ENCODE measurements at regions of chr10 and their contacts with region 1.

Region 1: GRCh38 chr10:25226775-25227682 is 52.2 kb downstream of the GPR158 start:
- DNase-seq: peak; percentile 31
- H3K4me3 Mint-ChIP-seq: no peak overlapping the region
- H3K27ac Mint-ChIP-seq: no peak overlapping the region
- H3K4me1 Mint-ChIP-seq: no peaks in the 10 kb centered on the region
- H3K27me3 Mint-ChIP-seq: no peaks in the 10 kb centered on the region

Region 2: DNA sequence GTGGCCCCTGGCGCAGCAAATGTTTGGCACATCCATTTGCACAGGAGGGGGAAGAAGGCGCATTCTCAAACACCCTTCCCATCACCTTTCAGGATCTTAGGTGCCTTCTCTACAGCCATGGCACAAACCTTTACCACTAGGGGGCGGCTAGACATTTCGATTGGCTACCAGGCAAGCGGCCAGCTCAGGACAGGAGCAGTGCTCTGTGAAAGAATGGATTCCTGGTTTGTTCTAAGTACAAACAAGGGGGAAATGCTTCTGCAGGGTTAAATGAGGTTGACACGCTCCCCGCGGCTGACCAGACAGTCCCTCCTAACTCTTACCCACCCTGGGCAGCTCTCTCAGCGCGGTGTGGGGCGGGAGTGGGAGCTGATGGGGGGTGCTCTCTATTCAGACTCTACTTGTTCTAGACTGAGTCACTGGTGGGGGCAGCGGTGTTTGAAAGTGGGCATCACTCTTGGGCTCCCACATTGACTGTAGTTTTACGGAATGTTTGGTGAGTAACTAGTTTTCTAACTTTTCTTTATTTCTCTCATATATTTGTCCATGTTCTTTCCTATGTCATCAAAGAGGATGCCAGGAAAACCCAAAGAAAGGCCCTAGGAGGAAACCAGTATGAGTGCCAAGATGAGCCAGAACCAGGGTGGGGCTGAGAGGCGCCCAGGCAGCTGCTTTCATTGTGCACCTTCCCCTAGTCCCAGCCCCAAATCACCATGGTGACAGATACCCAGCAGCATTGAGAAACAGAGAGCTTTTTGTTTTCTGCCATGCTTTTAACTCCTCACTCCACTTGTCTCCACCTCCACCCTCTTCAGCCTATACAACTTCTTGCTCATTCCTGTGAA is 113.6 kb before region 1 on chr10:
- CTCF ChIA-PET with region 1: interaction called, 11 read pairs
- POLR2A ChIA-PET with region 1: no interaction called
- intact Hi-C with region 1: no loop called
- DNase-seq: peak; percentile 52
- H3K4me3 Mint-ChIP-seq: no peak overlapping the region
- H3K27ac Mint-ChIP-seq: no peak overlapping the region
- H3K4me1 Mint-ChIP-seq: no peaks in the 10 kb centered on the region
- H3K27me3 Mint-ChIP-seq: peaks cover 11% of the 10 kb centered on the region

Region 3: GRCh38 chr10:25174461-25175230 is 52.4 kb before region 1 on chr10 and contains the start of gene GPR158:
- CTCF ChIA-PET with region 1: no interaction called
- POLR2A ChIA-PET with region 1: no interaction called
- intact Hi-C with region 1: no loop called
- DNase-seq: peak; percentile 63
- H3K4me3 Mint-ChIP-seq: no peak within 1 kb of the TSS
- H3K27ac Mint-ChIP-seq: no peak within 1 kb of the TSS
- H3K4me1 Mint-ChIP-seq: peaks cover 2% of the 10 kb centered on the region
- H3K27me3 Mint-ChIP-seq: peaks cover 42% of the 10 kb centered on the region
- total RNA-seq, gene GPR158: not detected

Region 4: GRCh38 chr10:25206693-25207414 is 20.2 kb before region 1 on chr10:
- CTCF ChIA-PET with region 1: no interaction called
- POLR2A ChIA-PET with region 1: no interaction called
- intact Hi-C with region 1: no loop called
- DNase-seq: no peak
- H3K4me3 Mint-ChIP-seq: no peak overlapping the region
- H3K27ac Mint-ChIP-seq: no peak overlapping the region
- H3K4me1 Mint-ChIP-seq: no peaks in the 10 kb centered on the region
- H3K27me3 Mint-ChIP-seq: peaks cover 1% of the 10 kb centered on the region

Region 5: DNA sequence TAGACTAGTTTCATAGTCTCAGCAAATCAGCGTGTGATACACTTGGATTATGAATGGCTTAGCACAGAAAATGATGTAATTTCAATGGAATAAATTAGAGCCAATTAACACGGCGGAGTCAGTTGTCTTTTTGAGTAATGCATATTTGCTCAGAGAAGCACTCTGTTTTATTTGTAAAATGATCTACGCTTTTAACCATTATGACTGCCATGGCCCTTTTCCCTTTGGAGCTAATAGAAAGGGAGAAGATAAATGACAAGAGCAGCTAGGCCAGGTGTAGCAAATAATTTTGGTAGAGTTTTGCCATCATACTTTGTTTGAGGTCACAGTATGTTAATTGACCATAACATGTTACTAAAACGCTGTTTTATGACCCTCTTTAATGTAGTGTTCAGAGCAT is 34.5 kb after region 1 on chr10:
- CTCF ChIA-PET with region 1: no interaction called
- POLR2A ChIA-PET with region 1: no interaction called
- intact Hi-C with region 1: no loop called
- DNase-seq: no peak
- H3K4me3 Mint-ChIP-seq: no peak overlapping the region
- H3K27ac Mint-ChIP-seq: no peak overlapping the region
- H3K4me1 Mint-ChIP-seq: no peaks in the 10 kb centered on the region
- H3K27me3 Mint-ChIP-seq: no peaks in the 10 kb centered on the region

Measured in activated CD4-positive, alpha-beta memory T cell treated with anti-CD3 and anti-CD28 coated beads for 36 hours (primary cell).